ENCODE measurements at regions of chr3 and their contacts with region 1.

Region 1: GRCh38 chr3:8290611-8291010 is 211.0 kb upstream of the LMCD1 start:
- DNase-seq: no peak
- H3K4me3 ChIP-seq: no peak overlapping the region
- H3K27ac ChIP-seq: no peak overlapping the region
- H3K4me1 ChIP-seq: no peaks in the 10 kb centered on the region
- H3K27me3 ChIP-seq: no peaks in the 10 kb centered on the region
- CTCF ChIP-seq: no peak
- POLR2A ChIP-seq: no peak

Region 2: GRCh38 chr3:8143186-8143585 is 147.4 kb before region 1 on chr3:
- CTCF ChIA-PET with region 1: no interaction called
- POLR2A ChIA-PET with region 1: no interaction called
- dilution Hi-C with region 1: no loop called
- intact Hi-C with region 1: no loop called
- DNase-seq: no peak
- H3K4me3 ChIP-seq: no peak overlapping the region
- H3K27ac ChIP-seq: no peak overlapping the region
- H3K4me1 ChIP-seq: no peaks in the 10 kb centered on the region
- H3K27me3 ChIP-seq: no peaks in the 10 kb centered on the region
- CTCF ChIP-seq: no peak
- POLR2A ChIP-seq: no peak

Region 3: DNA sequence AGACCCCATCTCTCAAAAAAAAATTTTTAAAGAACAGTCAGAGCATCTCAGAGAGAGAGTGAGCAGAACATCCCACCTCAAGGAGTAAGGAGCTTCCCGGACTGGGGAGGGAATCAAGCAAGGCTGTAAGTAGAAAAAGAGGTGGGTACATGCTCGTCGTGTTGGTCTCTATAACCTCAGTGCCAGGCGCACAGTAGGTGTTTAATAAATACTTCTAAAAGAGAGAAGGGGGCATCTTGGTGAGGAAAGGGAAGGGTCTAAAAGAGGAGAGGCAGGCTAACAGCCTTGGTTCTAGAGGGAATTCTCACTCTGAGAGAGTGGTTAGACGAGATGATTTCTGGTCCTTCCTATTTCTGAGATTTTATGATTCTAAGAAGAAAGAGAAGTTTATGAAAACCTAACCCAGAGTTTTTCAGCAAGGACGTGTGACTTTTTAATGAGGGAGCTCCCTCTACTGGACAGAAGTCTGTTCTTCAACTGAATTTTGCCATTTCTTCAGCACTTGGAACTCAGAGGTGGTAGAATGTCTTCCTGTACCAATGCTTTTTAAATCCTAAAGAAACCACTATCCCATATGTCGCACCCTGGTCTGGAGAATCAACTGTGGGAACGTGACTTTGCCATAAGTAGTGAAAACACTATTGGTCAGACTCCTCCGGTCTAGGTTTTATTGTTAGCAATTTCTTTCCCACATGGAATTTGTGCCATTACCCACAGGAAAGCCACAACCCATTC is 11.3 kb after region 1 on chr3:
- CTCF ChIA-PET with region 1: interaction called, 12 read pairs
- POLR2A ChIA-PET with region 1: no interaction called
- dilution Hi-C with region 1: no loop called
- intact Hi-C with region 1: no loop called
- DNase-seq: peak; percentile 34
- H3K4me3 ChIP-seq: no peak overlapping the region
- H3K27ac ChIP-seq: no peak overlapping the region
- H3K4me1 ChIP-seq: no peaks in the 10 kb centered on the region
- H3K27me3 ChIP-seq: no peaks in the 10 kb centered on the region
- CTCF ChIP-seq: peak; percentile 49 to 54
- POLR2A ChIP-seq: no peak